ENCODE measurements at regions of chr5 and their contacts with region 1.

Region 1: DNA sequence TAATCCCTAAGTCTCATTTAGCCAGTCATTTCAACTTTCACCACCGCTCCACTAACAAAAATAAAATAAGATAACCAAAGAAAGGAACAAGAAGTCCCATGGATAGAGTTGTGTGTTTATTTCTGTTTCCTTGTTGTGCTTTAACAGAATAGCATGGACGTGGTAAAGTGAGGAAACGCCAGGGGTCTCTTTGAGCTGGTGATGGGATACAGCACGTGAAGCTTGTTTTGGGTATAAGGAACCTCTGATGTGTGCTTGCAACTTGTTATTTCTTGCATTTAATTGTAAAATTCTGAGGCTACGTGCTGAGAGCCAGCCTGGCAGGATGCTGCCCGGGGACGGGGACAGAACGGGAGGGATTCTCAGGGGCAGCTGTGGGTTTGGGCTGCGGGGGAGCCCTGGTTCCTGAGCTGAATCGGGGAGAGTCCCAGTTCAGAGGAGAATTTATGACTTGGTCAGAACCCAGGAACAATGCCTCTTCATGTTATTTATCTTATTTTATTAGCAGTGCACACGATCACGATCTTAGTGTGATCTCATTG is 63.4 kb downstream of the ANKRD33B start:
- DNase-seq: no peak
- ATAC-seq: peak; percentile 6 to 35 (median 12)
- H3K4me3 ChIP-seq: peak overlapping the region; percentile 57
- H3K27ac ChIP-seq: peak overlapping the region; percentile 14
- H3K4me1 ChIP-seq: peaks cover 9% of the 10 kb centered on the region
- H3K27me3 ChIP-seq: no peaks in the 10 kb centered on the region
- CTCF ChIP-seq: no peak

Region 2: GRCh38 chr5:10452768-10453331 is 174.4 kb before region 1 on chr5:
- intact Hi-C with region 1: loop called (anchors 1 to 2 kb)
- DNase-seq: no peak
- ATAC-seq: peak; percentile 80 to 88 (median 86)
- H3K4me3 ChIP-seq: no peak overlapping the region
- H3K27ac ChIP-seq: no peak overlapping the region
- H3K4me1 ChIP-seq: no peaks in the 10 kb centered on the region
- H3K27me3 ChIP-seq: no peaks in the 10 kb centered on the region
- CTCF ChIP-seq: peak; percentile 73

Region 3: GRCh38 chr5:10563945-10564837 is 63.0 kb before region 1 on chr5 and contains the start of gene ANKRD33B:
- intact Hi-C with region 1: loop called in 1 of 2 experiments (anchors 5 kb)
- DNase-seq: peak; percentile 56 to 71
- ATAC-seq: peak; percentile 57 to 70 (median 61)
- H3K4me3 ChIP-seq: peak within 1 kb of the TSS; percentile 79
- H3K27ac ChIP-seq: peak within 1 kb of the TSS; percentile 76
- H3K4me1 ChIP-seq: peaks cover 13% of the 10 kb centered on the region
- H3K27me3 ChIP-seq: peaks cover 0 to 17% (median 5%) of the 10 kb centered on the region in 3 donors
- CTCF ChIP-seq: no peak
- total RNA-seq, gene ANKRD33B: 2.1 to 32.7 (median 8.3) TPM

Region 4: GRCh38 chr5:11222169-11222568 is 594.9 kb after region 1 on chr5:
- intact Hi-C with region 1: no loop called
- DNase-seq: no peak
- ATAC-seq: no peak
- H3K4me3 ChIP-seq: no peak overlapping the region
- H3K27ac ChIP-seq: no peak overlapping the region
- H3K4me1 ChIP-seq: no peaks in the 10 kb centered on the region
- H3K27me3 ChIP-seq: no peaks in the 10 kb centered on the region
- CTCF ChIP-seq: no peak